ENCODE measurements at regions of chr1 and their contacts with region 1.

Region 1: DNA sequence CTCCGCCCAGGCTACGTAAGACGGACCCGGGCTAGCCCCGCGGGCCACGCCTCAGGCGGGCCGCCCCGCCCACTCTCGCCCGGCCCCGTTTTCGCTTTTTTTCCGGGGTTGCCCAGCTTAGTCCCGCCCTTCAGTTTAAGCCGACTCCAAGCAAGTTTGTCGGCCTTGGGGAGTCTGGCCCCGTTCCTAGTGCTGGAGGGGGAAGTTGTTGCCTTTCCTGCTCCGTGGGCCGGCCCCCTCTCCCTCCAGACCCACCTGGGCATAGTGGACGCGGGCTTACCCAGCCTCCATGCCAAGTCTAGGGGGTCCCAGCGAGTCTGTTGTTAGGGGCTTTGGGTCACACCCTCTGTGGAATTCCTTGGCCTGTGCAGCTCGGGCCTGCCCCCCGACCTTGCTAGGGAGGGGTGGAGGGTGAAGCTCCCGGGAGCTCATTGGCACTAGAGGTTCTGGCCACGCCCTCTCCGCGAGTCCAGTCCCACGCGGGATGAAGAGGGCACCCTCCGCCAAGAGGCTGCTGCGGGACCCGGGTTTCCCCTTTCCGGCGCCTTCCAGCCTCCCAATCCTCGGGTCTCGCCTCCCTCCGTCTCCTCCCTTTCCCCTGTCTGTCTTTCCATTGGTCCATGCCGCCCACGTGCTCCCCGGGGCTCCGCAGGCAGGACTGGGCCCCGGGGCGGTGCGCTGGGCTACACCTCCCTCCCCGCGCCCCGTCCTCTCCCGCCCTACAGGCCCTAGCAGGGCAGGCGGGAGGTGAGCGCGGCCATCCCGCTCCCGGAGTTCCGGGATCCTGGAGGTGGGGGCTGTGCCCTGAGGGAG is 3.3 kb downstream of the RUSC1 start:
- DNase-seq: peak; percentile 69 to 94 (median 80)
- ATAC-seq: peak; percentile 79
- H3K4me3 ChIP-seq: peak overlapping the region; percentile 100
- H3K4me3 Mint-ChIP-seq: peak overlapping the region; percentile 92
- H3K27ac ChIP-seq: peak overlapping the region; percentile 93 to 97
- H3K27ac Mint-ChIP-seq: peak overlapping the region; percentile 69
- H3K4me1 ChIP-seq: peaks cover 49% of the 10 kb centered on the region
- H3K4me1 Mint-ChIP-seq: peaks cover 46% of the 10 kb centered on the region
- H3K27me3 ChIP-seq: no peaks in the 10 kb centered on the region
- H3K27me3 Mint-ChIP-seq: no peaks in the 10 kb centered on the region
- CTCF ChIP-seq: no peak

Region 2: DNA sequence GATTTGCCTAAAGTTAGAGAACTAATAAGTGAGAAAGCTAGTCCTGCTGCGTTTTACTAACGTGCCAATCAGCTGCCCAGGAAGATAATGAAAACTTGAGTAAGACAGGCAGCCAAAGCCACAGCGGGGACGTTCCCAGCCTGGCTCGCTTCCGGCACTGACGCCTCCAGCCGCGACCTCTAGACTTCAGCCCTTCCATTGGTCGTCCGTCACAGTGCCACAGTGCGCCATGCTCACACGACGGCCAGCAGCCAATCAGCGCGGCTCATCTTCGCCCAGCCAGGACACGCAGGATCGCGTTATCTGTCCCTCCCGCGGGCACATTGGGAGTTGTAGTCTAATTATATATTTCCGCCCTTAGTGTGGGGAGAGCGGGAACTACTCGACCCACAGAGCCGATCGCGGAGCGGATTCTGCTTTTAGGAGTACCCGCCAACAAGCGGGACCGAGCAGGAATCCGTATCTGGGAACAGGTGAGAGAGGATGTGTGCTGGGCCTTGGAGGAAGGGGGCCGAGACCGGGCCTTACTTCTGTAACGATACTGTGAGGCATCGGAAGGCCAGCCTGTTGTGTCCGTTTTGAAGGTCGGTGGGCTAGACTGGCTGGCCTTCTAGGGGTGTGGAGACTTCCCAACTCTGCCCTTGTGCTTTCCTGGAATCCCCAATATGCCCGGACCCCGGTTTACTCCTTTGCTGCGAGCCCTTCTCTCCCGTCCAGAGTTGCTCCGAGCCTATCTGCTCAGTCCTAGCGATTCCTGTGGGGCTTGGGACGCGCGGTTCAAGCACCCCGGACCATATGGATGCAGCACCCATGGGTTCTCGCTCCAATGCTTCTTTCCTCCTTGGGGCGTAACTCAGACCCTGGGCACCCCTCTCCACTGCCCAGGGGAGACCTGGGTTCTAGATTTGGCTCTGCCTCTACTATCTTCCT is 15.2 kb before region 1 on chr1 and contains the start of gene FDPS:
- CTCF ChIA-PET with region 1: interaction called, 7 read pairs
- POLR2A ChIA-PET with region 1: interaction called, 9 read pairs
- intact Hi-C with region 1: loop called (anchors 1 kb)
- DNase-seq: peak; percentile 90 to 100 (median 94)
- ATAC-seq: peak; percentile 97
- H3K4me3 ChIP-seq: peak within 1 kb of the TSS; percentile 93
- H3K4me3 Mint-ChIP-seq: peak within 1 kb of the TSS; percentile 94
- H3K27ac ChIP-seq: peak within 1 kb of the TSS; percentile 92 to 95
- H3K27ac Mint-ChIP-seq: peak within 1 kb of the TSS; percentile 96
- H3K4me1 ChIP-seq: peaks cover 29% of the 10 kb centered on the region
- H3K4me1 Mint-ChIP-seq: peaks cover 28% of the 10 kb centered on the region
- H3K27me3 ChIP-seq: no peaks in the 10 kb centered on the region
- H3K27me3 Mint-ChIP-seq: no peaks in the 10 kb centered on the region
- CTCF ChIP-seq: no peak
- total RNA-seq, gene FDPS: 44.0 to 47.3 TPM

Region 3: GRCh38 chr1:155410931-155411330 is 86.9 kb after region 1 on chr1:
- CTCF ChIA-PET with region 1: no interaction called
- POLR2A ChIA-PET with region 1: no interaction called
- intact Hi-C with region 1: no loop called
- DNase-seq: no peak
- ATAC-seq: no peak
- H3K4me3 ChIP-seq: no peak overlapping the region
- H3K4me3 Mint-ChIP-seq: no peak overlapping the region
- H3K27ac ChIP-seq: no peak overlapping the region
- H3K27ac Mint-ChIP-seq: no peak overlapping the region
- H3K4me1 ChIP-seq: no peaks in the 10 kb centered on the region
- H3K4me1 Mint-ChIP-seq: no peaks in the 10 kb centered on the region
- H3K27me3 ChIP-seq: no peaks in the 10 kb centered on the region
- H3K27me3 Mint-ChIP-seq: no peaks in the 10 kb centered on the region
- CTCF ChIP-seq: no peak

Region 4: GRCh38 chr1:155591770-155592169 is 267.8 kb after region 1 on chr1:
- CTCF ChIA-PET with region 1: no interaction called
- POLR2A ChIA-PET with region 1: no interaction called
- intact Hi-C with region 1: loop called in 1 of 2 experiments (anchors 5 kb)
- DNase-seq: peak in 6 of 14 experiments; percentile 7 to 78 (median 64)
- ATAC-seq: peak; percentile 72
- H3K4me3 ChIP-seq: no peak overlapping the region
- H3K4me3 Mint-ChIP-seq: no peak overlapping the region
- H3K27ac ChIP-seq: no peak overlapping the region
- H3K27ac Mint-ChIP-seq: no peak overlapping the region
- H3K4me1 ChIP-seq: no peaks in the 10 kb centered on the region
- H3K4me1 Mint-ChIP-seq: peaks cover 5% of the 10 kb centered on the region
- H3K27me3 ChIP-seq: no peaks in the 10 kb centered on the region
- H3K27me3 Mint-ChIP-seq: no peaks in the 10 kb centered on the region
- CTCF ChIP-seq: peak; percentile 63